BJ (cell line): ENCODE measurements at regions of chr10 and their contacts with region 1.

Region 1: DNA sequence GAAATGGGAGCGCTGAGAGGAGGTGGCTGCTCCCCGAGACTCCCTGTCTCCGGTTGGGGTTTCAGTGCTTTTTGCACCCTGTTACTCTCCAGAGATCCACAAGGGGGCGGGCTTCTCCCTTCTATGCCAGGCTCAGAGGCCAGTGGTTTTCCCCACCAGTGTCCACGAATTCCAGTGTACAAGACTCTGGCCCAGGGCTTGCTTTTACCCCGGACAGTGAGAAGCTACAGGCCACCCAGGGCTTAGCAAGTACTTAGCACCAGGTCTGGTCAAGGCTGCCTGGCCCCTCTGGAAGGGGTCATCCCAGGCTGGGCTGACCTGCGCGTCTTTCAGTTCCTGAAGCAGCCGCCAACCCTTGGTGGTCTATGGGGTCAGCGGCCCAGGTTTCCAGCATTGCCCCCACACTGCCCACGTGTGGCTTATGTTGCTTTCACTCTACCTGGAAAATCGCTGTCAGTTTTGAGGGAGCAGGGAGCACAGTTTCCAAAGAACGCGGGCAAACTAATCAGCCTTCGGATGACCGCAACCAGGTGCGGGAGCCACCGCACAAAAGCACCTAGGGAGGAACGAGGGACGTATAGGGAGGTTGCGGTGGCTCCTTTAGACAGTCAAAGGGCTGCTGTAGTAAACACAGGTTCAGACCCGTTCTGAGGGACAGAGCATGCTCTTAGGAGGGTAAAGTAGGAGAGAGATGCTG is 6.8 kb downstream of the CYP26A1 start:
- DNase-seq: no peak
- H3K4me3 ChIP-seq: no peak overlapping the region
- H3K27me3 ChIP-seq: peaks cover 8% of the 10 kb centered on the region
- CTCF ChIP-seq: peak; percentile 86

Region 2: GRCh38 chr10:93062514-93063143 is 17.9 kb before region 1 on chr10:
- CTCF ChIA-PET with region 1: interaction called, 73 read pairs
- POLR2A ChIA-PET with region 1: no interaction called
- DNase-seq: no peak
- H3K4me3 ChIP-seq: peak overlapping the region; percentile 32
- H3K27me3 ChIP-seq: peaks cover 53% of the 10 kb centered on the region
- CTCF ChIP-seq: peak; percentile 48

Region 3: GRCh38 chr10:93068411-93069244 is 11.9 kb before region 1 on chr10:
- CTCF ChIA-PET with region 1: interaction called, 73 read pairs
- POLR2A ChIA-PET with region 1: no interaction called
- DNase-seq: no peak
- H3K4me3 ChIP-seq: peak overlapping the region; percentile 9; the same call in 1 of the 2 replicates
- H3K27me3 ChIP-seq: peaks cover 90% of the 10 kb centered on the region
- CTCF ChIP-seq: 0 out of 2 replicates have a peak, but pooled peaks have one; percentile 10

Region 4: DNA sequence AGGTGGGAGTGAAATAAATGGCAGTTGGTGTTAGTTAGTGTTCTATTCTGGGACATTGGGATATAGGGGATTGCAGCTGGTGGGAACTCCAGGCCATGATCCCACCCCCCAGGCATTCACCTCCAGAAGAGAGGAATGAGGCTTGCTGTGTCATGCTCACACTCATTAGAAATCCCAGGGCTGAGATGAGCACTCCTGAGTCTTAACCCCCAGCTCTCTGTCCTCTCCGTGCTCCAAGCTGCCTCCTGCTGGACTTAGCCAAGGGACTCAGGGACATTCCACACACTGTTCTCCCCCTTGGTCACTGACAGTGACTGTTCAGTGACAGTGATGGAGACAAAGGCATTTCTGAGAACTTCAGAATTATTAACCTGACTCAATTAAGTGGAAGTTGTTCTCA is 14.7 kb after region 1 on chr10:
- CTCF ChIA-PET with region 1: interaction called, 19 read pairs
- POLR2A ChIA-PET with region 1: no interaction called
- DNase-seq: no peak
- H3K4me3 ChIP-seq: no peak overlapping the region
- H3K27me3 ChIP-seq: no peaks in the 10 kb centered on the region; the same call in 1 of the 2 replicates
- CTCF ChIP-seq: no peak

Region 5: DNA sequence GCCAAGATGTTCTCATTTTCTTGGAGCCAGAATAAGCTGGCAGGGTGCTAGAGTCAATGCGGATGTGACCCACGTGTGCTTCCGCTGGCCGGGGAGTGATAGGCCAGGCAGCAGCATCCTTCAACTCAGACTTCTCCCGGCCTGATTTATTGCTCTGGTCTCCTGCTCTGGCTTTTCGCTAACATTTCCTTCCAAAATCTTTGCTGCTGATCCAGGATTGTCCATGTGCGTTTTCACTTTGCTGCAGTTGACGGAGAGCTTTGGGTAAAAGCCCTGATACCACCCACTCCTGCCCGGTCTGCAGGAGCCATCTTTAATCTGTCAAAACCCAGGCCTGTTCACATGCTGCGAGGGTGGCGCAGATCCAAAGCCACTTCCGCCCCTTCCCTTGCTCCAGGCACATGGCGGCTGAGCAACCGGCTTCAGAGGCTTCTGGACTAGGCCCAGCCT is 100.0 kb after region 1 on chr10:
- CTCF ChIA-PET with region 1: no interaction called
- POLR2A ChIA-PET with region 1: no interaction called
- DNase-seq: peak; percentile 35
- H3K4me3 ChIP-seq: no peak overlapping the region
- H3K27me3 ChIP-seq: no peaks in the 10 kb centered on the region; the same call in 1 of the 2 replicates
- CTCF ChIP-seq: no peak

Region 6: GRCh38 chr10:93193906-93194305 is 113.4 kb after region 1 on chr10:
- CTCF ChIA-PET with region 1: no interaction called
- POLR2A ChIA-PET with region 1: no interaction called
- DNase-seq: no peak
- H3K4me3 ChIP-seq: no peak overlapping the region
- H3K27me3 ChIP-seq: peaks cover 3% of the 10 kb centered on the region; the same call in 1 of the 2 replicates
- CTCF ChIP-seq: no peak

Region 7: DNA sequence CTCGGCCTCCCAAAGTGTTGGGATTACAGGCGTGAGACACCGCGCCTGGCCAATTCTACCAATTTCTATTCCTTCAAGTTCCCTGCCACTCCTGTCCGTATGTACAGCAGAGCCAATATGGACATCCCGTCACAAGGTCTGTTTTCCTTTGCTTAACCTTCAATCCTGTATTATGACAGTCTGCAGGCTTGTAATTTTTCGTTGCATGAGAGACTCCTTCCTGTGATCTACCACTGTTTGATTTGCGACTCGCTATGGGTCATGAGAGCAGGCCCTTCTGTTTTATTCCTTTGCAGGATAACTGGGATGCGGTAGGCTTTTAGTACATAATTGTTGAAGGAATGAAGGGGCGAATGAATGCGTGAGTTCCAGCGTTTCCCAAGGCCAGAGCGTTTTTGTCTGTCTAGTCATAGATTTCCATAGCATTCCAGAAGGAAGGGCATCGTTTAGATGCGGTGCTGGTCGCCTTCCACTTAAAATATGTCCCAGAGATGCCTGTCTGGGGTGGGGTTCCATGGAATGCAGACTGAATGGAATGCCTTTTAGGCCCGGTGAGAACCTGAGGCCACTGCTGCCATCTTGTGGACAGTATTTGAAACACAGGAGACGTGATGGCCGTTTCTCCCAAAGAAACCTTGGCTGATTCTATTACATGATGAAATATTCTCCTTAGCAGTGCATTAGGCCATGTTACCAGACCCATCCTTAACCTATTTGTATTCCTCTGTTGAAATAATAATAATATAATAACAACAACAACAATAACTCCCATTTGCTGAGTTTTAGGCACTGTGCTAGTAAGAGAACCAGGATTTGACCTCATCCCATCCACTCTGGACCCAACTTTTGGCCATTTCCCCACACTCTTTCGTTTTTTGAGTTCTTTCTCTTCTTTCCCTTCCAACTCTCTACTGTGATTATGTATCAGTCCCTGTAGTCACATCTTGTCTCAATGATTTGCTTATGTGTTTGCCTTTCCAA is 208.4 kb after region 1 on chr10:
- CTCF ChIA-PET with region 1: interaction called, 39 read pairs
- POLR2A ChIA-PET with region 1: no interaction called
- DNase-seq: peak; percentile 87
- H3K4me3 ChIP-seq: no peak overlapping the region
- H3K27me3 ChIP-seq: no peaks in the 10 kb centered on the region
- CTCF ChIP-seq: peak; percentile 79

Region 8: DNA sequence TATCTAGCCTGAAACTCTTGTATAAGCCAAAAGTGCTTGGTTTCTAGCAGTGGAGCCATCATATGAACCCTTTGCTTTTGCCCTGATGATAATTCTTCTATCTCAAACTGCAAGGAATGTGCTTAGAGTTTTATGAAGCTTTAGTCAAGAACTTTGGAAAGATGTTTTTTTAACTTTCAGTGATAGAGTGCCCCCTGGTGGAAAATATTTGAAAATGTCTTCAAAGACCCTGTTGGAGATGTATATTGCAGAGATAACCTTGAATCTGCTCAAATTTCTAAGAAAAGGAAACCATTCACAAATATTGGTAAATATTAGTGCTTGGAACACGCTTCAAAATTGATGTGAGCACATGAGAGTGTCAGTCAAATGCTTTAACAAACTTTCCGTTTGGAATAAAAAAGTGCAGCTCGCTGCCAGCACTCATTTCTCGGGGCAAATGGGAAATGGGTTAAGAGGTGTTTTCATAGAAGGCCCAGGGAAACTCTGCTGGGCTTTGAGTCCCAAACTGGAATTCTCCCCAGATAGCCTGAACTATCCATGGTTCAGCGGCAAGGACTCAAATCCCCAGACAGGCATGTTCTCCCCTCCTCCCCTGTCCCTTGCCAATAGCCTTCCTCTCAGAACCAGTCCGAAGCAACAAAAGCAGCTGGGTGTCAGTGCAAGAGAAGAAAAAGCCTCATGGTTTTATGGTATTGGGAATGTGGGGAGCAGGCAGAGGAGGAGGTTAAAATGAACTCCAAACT is 272.3 kb after region 1 on chr10:
- CTCF ChIA-PET with region 1: interaction called, 24 read pairs
- POLR2A ChIA-PET with region 1: no interaction called
- DNase-seq: no peak
- H3K4me3 ChIP-seq: no peak overlapping the region
- H3K27me3 ChIP-seq: no peaks in the 10 kb centered on the region
- CTCF ChIP-seq: peak; percentile 55

Region 9: DNA sequence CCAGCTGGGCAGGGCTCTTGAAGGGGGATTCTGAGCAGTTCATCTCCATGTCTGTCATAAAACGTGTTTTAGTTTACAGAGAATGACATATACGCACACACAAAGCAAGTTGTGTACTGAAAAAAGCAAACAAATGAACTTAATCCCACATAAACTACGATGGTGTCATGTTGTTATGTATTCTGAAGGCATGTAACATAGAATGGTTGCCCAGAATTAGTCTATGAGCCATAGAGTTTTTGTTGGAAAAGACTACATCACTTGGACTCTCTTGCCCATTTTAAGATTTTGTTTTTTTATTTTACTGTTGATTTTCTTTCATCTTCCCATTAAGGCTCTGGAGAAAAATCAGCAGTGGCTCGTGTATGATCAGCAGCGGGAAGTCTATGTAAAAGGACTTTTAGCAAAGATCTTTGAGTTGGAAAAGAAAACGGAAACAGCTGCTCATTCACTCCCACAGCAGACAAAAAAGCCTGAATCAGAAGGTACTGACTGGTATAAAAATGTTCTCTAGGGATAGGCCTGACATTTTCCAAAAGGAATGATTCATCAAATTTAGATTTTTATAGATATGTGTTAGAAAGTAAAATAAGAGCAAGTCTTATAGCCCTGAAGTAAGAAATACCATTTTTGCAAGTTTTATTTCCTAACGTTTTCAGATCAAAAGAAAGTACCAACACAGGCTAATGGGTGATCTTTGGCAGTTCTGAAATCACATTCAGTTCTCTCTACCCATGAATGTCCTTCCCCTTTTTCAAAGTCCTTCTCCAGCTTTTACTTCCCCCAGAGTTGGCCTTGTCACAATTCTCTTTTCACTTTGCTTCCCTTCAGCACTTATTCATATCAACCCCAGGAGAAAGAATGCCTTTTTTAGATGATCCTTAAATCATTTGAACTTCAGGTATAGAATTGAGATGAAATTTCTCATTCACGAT is 434.8 kb after region 1 on chr10:
- CTCF ChIA-PET with region 1: interaction called, 19 read pairs
- POLR2A ChIA-PET with region 1: no interaction called
- DNase-seq: no peak
- H3K4me3 ChIP-seq: no peak overlapping the region
- H3K27me3 ChIP-seq: no peaks in the 10 kb centered on the region
- CTCF ChIP-seq: no peak